Activated naive CD8-positive, alpha-beta T cell treated with anti-CD3 and anti-CD28 coated beads, Interleukin-2, amount 10 ng/mL, durations not matched to agents 7 days and 5 days (primary cell): ENCODE measurements at regions of chr16 and their contacts with region 1.

Region 1: GRCh38 chr16:81444448-81445121 is at the start of gene CMIP:
- DNase-seq: peak; percentile 91
- ATAC-seq: peak; percentile 82
- H3K4me3 Mint-ChIP-seq: peak within 1 kb of the TSS; percentile 91
- H3K27ac Mint-ChIP-seq: peak within 1 kb of the TSS; percentile 90
- H3K4me1 Mint-ChIP-seq: peaks cover 36% of the 10 kb centered on the region
- H3K27me3 Mint-ChIP-seq: peaks cover 36% of the 10 kb centered on the region
- total RNA-seq, gene CMIP: 65.4 to 76.7 TPM

Region 2: GRCh38 chr16:81521151-81521626 is 76.6 kb after region 1 on chr16:
- POLR2A ChIA-PET with region 1: interaction called, 11 read pairs
- DNase-seq: peak; percentile 86
- ATAC-seq: peak; percentile 85
- H3K4me3 Mint-ChIP-seq: peak overlapping the region; percentile 53
- H3K27ac Mint-ChIP-seq: peak overlapping the region; percentile 86
- H3K4me1 Mint-ChIP-seq: peaks cover 63% of the 10 kb centered on the region
- H3K27me3 Mint-ChIP-seq: no peaks in the 10 kb centered on the region